ENCODE measurements at regions of chr1 and their contacts with region 1.

Region 1: GRCh38 chr1:93969887-93970286 is 60.7 kb upstream of the GCLM start:
- DNase-seq: no peak
- H3K4me3 ChIP-seq: no peak overlapping the region
- H3K27ac ChIP-seq: no peak overlapping the region
- H3K4me1 ChIP-seq: peaks cover 49% of the 10 kb centered on the region
- H3K27me3 ChIP-seq: no peaks in the 10 kb centered on the region
- CTCF ChIP-seq: no peak

Region 2: DNA sequence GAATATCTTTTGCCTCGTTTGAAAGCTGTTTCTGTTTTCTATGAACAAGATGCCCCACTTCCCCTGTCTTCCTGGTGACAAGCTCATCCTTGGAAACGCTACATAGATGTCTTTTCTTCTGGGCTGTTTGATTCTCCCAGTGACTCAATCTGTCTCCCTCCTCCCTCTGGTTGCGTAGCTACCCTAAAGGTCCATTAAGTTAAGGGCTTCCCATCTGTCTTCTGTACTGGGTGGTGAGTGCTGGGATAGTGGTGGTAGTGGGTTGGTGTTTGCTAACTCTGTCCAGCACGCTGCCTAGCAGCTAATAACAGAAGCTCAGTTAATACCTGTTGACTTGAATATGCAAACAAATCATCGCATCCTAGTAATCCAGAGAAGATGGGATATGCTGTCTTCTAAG is 10.5 kb before region 1 on chr1:
- CTCF ChIA-PET with region 1: interaction called, 14 read pairs
- POLR2A ChIA-PET with region 1: no interaction called
- intact Hi-C with region 1: no loop called
- DNase-seq: peak in 1 of 2 experiments; percentile 2
- H3K4me3 ChIP-seq: no peak overlapping the region
- H3K27ac ChIP-seq: no peak overlapping the region
- H3K4me1 ChIP-seq: peaks cover 49% of the 10 kb centered on the region
- H3K27me3 ChIP-seq: no peaks in the 10 kb centered on the region
- CTCF ChIP-seq: no peak

Measured in PC-9 (cell line).